Activated CD4-positive, alpha-beta T cell treated with anti-CD3 and anti-CD28 coated beads for 36 hours (primary cell): ENCODE measurements at regions of chr11 and their contacts with region 1.

Region 1: DNA sequence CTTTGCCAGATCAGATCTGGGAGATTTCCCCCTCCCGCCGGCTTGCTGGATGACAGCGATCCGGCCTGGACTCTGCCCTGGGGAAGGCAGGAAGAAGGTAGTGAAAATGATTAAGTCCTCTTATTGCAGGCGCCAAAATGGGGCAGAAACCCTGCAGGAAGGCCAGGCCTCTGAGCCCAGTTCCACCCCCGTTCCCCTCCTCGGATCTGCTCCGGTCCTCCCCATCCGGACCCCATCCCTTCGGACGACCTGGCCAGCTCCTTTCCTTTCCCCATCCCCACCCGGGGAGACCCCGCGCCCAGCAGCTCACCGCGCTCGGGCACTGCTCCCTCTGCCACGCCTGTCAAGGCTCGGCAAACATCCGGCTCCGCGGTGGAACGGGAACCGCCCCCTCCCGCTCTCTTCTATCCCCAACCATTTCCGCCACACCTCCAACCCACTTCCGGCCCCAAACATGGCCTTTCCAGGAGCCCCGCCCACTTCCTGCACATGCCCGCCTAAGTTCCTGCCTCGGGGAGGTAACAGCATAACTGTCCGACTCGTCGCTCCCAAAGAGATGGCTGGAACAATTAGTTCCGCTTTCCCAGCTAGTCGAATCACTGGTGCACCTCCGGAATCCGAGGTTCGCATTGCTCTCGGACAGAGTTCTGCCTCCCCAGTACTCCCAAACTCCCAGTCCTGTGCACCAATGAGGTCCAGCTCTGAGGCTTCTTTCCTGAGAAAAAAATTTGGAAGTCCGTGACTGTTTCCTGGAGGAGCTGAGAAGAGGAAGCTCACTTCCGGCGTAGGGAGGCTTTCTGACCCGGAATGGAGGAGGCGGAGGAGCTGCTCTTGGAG is at the starts of genes ARHGAP1 and ZNF408:
- DNase-seq: peak; percentile 100
- ATAC-seq: peak; percentile 95
- H3K4me3 Mint-ChIP-seq: peak within 1 kb of the TSS; percentile 82
- H3K27ac Mint-ChIP-seq: peak within 1 kb of the TSS; percentile 96
- H3K4me1 Mint-ChIP-seq: peaks cover 42% of the 10 kb centered on the region
- H3K27me3 Mint-ChIP-seq: no peaks in the 10 kb centered on the region
- total RNA-seq, gene ARHGAP1: 40.2 to 50.0 TPM
- total RNA-seq, gene ZNF408: 8.8 to 9.0 TPM

Region 2: DNA sequence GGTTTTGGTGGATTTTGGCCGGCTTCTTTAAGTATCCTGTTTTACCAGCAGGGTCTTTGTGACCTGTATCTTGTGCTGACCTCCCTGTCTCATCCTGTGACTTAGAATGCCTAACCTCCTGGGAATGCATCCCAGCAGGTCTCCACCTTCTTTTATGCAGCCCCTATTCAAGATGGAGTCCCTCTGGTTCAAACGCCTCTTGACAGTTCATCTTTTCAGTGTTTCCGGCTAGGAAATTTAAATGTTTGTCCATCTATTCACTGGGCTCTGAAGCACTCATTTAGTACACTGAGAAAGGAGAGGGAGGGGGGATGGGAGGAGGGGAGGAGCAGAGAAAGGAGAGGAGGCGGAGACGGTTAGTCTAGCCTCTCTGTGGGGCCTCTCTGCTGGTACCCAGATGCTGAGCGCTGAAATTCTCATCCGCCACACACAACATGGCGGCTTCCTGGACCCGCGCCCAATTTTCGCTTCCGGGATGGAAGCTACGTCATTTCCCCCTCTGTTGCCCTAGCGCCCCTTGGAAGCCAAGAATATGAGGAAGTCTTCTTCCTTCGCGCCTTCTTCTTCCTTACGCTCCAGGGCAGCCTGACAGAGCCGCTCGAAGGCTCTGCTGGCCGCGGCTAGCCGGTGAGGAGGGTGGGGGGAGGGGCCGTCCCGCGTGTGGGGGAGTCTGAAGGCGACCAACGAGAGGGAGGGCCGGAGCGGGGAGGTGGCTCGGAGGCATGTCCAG is 1345.3 kb before region 1 on chr11:
- CTCF ChIA-PET with region 1: no interaction called
- POLR2A ChIA-PET with region 1: no interaction called
- intact Hi-C with region 1: loop called in 1 of 2 experiments (anchors 2 kb)
- DNase-seq: peak; percentile 93
- ATAC-seq: peak; percentile 97
- H3K4me3 Mint-ChIP-seq: peak overlapping the region; percentile 75
- H3K27ac Mint-ChIP-seq: peak overlapping the region; percentile 72
- H3K4me1 Mint-ChIP-seq: peaks cover 21% of the 10 kb centered on the region
- H3K27me3 Mint-ChIP-seq: peaks cover 2% of the 10 kb centered on the region

Region 3: GRCh38 chr11:46238967-46239800 is 461.3 kb before region 1 on chr11:
- CTCF ChIA-PET with region 1: no interaction called
- POLR2A ChIA-PET with region 1: no interaction called
- intact Hi-C with region 1: loop called in 1 of 2 experiments (anchors 1 kb)
- DNase-seq: peak; percentile 90
- ATAC-seq: peak; percentile 70
- H3K4me3 Mint-ChIP-seq: peak overlapping the region; percentile 70
- H3K27ac Mint-ChIP-seq: peak overlapping the region; percentile 6
- H3K4me1 Mint-ChIP-seq: peaks cover 36% of the 10 kb centered on the region
- H3K27me3 Mint-ChIP-seq: peaks cover 11% of the 10 kb centered on the region

Region 4: GRCh38 chr11:46489661-46490560 is 210.5 kb before region 1 on chr11:
- CTCF ChIA-PET with region 1: no interaction called
- POLR2A ChIA-PET with region 1: no interaction called
- intact Hi-C with region 1: no loop called
- DNase-seq: peak; percentile 51
- ATAC-seq: peak; percentile 60
- H3K4me3 Mint-ChIP-seq: no peak overlapping the region
- H3K27ac Mint-ChIP-seq: no peak overlapping the region
- H3K4me1 Mint-ChIP-seq: peaks cover 4% of the 10 kb centered on the region
- H3K27me3 Mint-ChIP-seq: no peaks in the 10 kb centered on the region

Region 5: DNA sequence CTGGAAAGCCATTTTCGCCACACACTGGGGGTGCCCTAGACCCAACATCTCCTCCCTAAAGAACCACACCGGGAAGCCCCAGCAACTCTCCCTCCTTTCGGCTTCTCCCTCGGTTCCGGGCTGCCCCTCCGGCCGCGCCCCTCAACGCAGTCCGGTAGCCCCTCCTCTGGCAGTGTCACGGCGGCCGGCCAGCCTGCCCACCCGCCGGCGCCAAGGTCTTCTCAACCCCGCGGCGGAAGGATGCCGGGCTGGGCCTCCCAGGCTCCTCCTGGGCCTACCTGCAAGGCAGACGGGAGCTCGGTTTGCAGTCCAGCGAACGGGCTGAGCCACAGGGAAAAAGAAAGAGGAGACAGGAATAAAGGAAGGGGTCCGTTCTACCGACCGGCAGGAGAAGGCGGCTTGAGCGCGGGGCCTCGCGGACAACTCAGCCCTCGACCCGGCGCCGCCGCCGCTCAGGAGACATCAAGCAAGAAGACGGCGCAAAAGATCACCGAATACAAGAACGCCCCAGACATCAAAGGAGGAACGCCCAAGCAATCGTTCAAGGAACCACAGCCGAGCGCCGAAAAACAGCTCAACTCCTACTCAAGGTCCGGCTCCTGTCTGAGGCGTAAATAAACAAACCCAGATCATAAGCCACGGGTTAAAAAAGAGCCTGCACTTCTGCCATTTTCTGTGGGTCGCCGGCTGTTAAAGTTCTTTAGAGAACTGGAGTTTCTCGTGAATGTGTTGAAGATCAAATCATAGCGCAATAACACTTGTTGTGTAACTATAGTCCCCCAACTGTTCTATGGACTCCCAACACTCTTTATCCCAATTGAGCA is 106.7 kb before region 1 on chr11 and contains the start of gene AMBRA1:
- CTCF ChIA-PET with region 1: no interaction called
- POLR2A ChIA-PET with region 1: interaction called, 3 read pairs
- intact Hi-C with region 1: loop called in 1 of 2 experiments (anchors 1 kb)
- DNase-seq: peak; percentile 91
- ATAC-seq: peak; percentile 87
- H3K4me3 Mint-ChIP-seq: peak within 1 kb of the TSS; percentile 93
- H3K27ac Mint-ChIP-seq: peak within 1 kb of the TSS; percentile 91
- H3K4me1 Mint-ChIP-seq: peaks cover 40% of the 10 kb centered on the region
- H3K27me3 Mint-ChIP-seq: no peaks in the 10 kb centered on the region
- total RNA-seq, gene AMBRA1: 24.8 to 26.4 TPM

Region 6: DNA sequence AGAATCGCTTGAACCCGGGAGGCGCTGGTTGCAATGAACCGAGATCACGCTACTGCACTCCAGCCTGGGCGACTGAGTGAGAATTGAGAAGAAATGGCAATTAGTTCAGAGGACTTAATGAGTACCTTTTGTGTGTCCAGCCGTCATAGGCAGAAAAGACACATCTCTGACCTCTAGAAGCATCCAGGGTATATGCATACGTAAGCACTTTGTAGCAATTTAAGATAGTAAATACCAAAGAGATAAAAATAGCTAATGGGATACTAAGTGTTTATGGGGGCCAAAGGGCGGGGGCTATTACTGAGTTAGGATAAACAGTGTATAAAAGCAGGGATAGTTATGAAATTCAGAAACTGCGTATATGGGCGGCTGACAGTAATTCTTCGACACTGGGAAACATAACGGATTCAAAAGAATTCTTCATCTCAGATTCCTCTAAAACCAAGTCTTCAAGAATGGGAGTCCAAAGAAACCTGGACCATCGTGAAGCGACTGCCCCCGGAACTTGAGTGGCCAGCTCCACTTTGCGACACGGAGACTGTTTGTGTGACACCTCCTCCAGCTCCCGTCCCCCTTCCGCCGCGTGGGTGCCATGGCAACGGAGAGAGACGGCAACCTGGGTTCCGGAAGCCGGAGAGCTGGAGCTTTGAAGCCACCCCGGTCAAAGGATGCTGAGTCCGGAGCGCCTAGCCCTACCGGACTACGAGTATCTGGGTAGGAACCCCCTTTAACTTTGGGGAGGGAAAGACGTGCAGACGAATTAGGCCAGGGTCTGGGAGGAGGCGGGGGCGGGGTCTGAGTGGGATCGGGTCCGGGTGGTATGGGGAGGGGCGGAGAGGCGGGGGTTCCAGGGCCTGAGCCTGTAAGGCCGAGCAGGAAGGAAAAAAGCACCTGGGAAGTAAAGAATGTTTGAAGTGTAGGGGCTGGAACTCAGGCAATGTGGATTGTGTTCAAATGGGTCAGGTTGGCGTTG is 236.0 kb after region 1 on chr11 and contains the start of gene CSTPP1:
- CTCF ChIA-PET with region 1: no interaction called
- POLR2A ChIA-PET with region 1: interaction called, 4 read pairs
- intact Hi-C with region 1: loop called in 1 of 2 experiments (anchors 1 kb)
- DNase-seq: peak; percentile 97
- ATAC-seq: peak; percentile 96
- H3K4me3 Mint-ChIP-seq: peak within 1 kb of the TSS; percentile 86
- H3K27ac Mint-ChIP-seq: peak within 1 kb of the TSS; percentile 88
- H3K4me1 Mint-ChIP-seq: peaks cover 16% of the 10 kb centered on the region
- H3K27me3 Mint-ChIP-seq: peaks cover 5% of the 10 kb centered on the region
- total RNA-seq, gene CSTPP1: 17.9 to 18.6 TPM

Region 7: GRCh38 chr11:47269002-47269828 is 568.8 kb after region 1 on chr11:
- CTCF ChIA-PET with region 1: no interaction called
- POLR2A ChIA-PET with region 1: no interaction called
- intact Hi-C with region 1: loop called in 1 of 2 experiments (anchors 1 kb)
- DNase-seq: peak; percentile 93
- ATAC-seq: peak; percentile 61
- H3K4me3 Mint-ChIP-seq: peak overlapping the region; percentile 76
- H3K27ac Mint-ChIP-seq: peak overlapping the region; percentile 98
- H3K4me1 Mint-ChIP-seq: peaks cover 60% of the 10 kb centered on the region
- H3K27me3 Mint-ChIP-seq: no peaks in the 10 kb centered on the region

Region 8: DNA sequence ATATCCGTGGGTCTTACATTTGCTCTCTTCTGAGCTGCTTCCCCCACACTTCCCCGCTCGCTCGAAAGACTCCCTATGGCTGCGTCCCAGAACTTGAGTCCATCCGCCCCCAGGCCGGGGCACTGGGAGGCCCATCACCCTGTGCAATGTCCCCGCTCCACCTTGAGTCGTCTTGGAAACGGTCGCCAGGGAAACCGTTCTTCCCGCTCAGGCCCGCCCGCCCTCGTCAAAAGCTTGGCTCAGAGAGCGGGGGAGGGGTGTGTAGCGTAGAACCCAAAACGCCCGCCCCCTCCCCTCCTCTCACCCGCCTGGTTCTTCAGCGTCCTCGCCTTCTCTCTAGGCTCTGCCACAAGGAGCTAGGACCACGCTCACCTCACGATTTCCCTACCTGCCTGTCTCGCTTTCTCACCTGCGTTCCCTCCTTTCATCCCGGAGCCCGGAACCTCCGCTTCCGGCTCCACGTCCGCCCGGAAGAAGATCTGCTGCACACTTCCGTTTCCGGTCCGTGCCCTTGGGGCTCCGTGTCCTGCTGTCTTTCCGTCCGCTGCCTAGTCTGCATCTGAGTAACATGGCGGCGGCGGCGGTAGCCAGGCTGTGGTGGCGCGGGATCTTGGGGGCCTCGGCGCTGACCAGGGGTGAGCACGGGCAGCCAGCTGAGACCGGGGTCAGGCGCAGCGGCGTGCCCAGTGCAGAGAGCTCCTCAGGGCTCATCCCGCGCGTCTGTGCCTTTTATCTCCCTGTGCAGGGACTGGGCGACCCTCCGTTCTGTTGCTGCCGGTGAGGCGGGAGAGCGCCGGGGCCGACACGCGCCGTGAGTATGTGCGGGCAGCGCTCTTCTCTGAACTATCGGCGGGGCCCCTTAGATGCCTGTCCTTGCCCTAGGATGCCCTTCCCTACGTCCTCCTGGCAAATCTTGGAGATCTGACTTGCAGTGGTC is 878.3 kb after region 1 on chr11 and contains the starts of genes KBTBD4 and NDUFS3:
- CTCF ChIA-PET with region 1: no interaction called
- POLR2A ChIA-PET with region 1: no interaction called
- intact Hi-C with region 1: loop called in 1 of 2 experiments (anchors 2 kb)
- DNase-seq: peak; percentile 92
- ATAC-seq: peak; percentile 96
- H3K4me3 Mint-ChIP-seq: peak within 1 kb of the TSS; percentile 87
- H3K27ac Mint-ChIP-seq: peak within 1 kb of the TSS; percentile 93
- H3K4me1 Mint-ChIP-seq: peaks cover 39% of the 10 kb centered on the region
- H3K27me3 Mint-ChIP-seq: no peaks in the 10 kb centered on the region
- total RNA-seq, gene KBTBD4: 11.9 to 18.4 TPM
- total RNA-seq, gene NDUFS3: 96.9 to 108 TPM